Activated B cell treated with CpG ODN at 0.5 μM for 24 hours (primary cell): ENCODE measurements at regions of chr10 and their contacts with region 1.

Region 1: GRCh38 chr10:71825217-71825616 is 25.8 kb downstream of the PSAP start:
- DNase-seq: no peak
- ATAC-seq: no peak
- H3K4me3 Mint-ChIP-seq: no peak overlapping the region
- H3K27ac Mint-ChIP-seq: no peak overlapping the region
- H3K4me1 Mint-ChIP-seq: peaks cover 6% of the 10 kb centered on the region
- H3K27me3 Mint-ChIP-seq: no peaks in the 10 kb centered on the region
- CTCF ChIP-seq: no peak

Region 2: DNA sequence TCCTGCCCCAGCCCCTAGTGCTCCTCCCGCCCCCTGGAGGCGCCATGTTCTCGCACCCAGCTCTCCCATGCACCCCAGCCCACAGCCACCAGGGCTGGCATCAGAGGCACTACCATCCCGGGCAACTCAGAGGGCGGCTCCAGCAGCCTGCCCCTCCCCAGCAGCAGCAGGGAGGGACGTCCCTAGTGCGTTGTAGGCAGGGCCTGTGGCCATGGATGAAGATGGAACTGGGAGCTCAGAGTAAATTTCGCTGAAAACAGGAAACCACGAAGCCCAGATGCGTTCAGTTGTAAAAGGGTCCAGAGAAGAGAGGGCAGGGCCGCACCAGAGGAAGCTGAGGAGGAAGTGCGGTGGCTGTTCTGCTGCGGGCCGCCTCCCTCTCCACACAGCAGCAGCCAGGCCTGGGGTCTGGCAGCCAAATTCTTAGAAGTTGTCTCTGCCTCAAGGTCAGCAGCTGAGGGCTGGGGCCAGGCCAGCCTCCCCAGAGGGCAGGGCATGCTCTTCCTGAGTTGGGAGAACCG is 76.5 kb before region 1 on chr10:
- CTCF ChIA-PET with region 1: no interaction called
- POLR2A ChIA-PET with region 1: no interaction called
- intact Hi-C with region 1: no loop called
- DNase-seq: peak; percentile 53
- ATAC-seq: peak; percentile 77
- H3K4me3 Mint-ChIP-seq: peak overlapping the region; percentile 69
- H3K27ac Mint-ChIP-seq: peak overlapping the region; percentile 95
- H3K4me1 Mint-ChIP-seq: peaks cover 81% of the 10 kb centered on the region
- H3K27me3 Mint-ChIP-seq: no peaks in the 10 kb centered on the region
- CTCF ChIP-seq: no peak

Region 3: GRCh38 chr10:71795248-71795647 is 30.0 kb before region 1 on chr10:
- CTCF ChIA-PET with region 1: no interaction called
- POLR2A ChIA-PET with region 1: no interaction called
- intact Hi-C with region 1: no loop called
- DNase-seq: no peak
- ATAC-seq: no peak
- H3K4me3 Mint-ChIP-seq: no peak overlapping the region
- H3K27ac Mint-ChIP-seq: no peak overlapping the region
- H3K4me1 Mint-ChIP-seq: peaks cover 24% of the 10 kb centered on the region
- H3K27me3 Mint-ChIP-seq: no peaks in the 10 kb centered on the region
- CTCF ChIP-seq: no peak

Region 4: DNA sequence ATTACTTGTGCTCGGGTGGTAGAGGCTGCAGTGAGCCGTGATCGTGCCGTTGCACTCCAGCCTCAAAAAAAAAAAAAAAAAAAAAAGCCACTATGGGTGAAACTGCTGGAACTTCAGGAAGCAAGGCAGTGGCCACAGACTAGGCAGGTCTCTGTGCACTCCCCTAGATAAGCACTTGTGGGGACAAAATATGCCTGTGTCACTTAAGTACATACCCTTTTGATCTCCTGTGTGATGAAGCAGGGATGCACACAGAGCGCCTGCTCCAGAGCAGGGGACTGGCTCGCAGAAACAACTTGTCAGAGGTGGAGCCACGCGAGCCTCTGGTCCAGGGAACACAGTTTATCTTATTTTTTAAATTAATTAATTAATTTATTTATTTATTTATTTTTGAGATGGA is 68.7 kb after region 1 on chr10:
- CTCF ChIA-PET with region 1: interaction called, 20 read pairs
- POLR2A ChIA-PET with region 1: interaction called, 3 read pairs
- intact Hi-C with region 1: no loop called
- DNase-seq: no peak
- ATAC-seq: no peak
- H3K4me3 Mint-ChIP-seq: no peak overlapping the region
- H3K27ac Mint-ChIP-seq: no peak overlapping the region
- H3K4me1 Mint-ChIP-seq: peaks cover 20% of the 10 kb centered on the region
- H3K27me3 Mint-ChIP-seq: peaks cover 2% of the 10 kb centered on the region
- CTCF ChIP-seq: no peak